ENCODE measurements at regions of chr10 and their contacts with region 1.

Region 1: DNA sequence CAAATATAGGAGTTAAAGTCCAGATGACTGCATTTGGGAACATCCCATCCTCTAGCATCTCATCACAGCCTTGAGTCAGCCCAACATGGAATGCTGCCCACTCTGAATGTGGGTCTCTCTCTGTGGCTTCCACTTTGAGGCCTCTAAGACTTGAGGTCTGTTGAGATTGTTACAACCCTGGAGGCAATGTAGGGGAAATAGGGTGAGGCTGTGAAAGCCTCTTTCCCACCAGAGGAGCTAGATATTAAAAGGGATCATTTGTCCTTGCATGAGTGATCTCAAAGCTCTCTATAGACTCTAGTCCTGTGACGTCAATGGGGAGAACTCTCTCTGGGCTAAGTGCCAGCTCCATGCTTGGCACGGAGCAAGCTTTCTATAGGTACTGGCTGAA is 6.4 kb upstream of the GOLGA7B start:
- DNase-seq: no peak
- ATAC-seq: no peak
- H3K4me3 ChIP-seq: no peak overlapping the region
- H3K27ac ChIP-seq: no peak overlapping the region
- H3K4me1 ChIP-seq: peaks cover 15 to 23% of the 10 kb centered on the region in 2 donors
- H3K27me3 ChIP-seq: no peaks in the 10 kb centered on the region
- CTCF ChIP-seq: no peak
- POLR2A ChIP-seq: no peak

Region 2: GRCh38 chr10:97822261-97822687 is 21.0 kb before region 1 on chr10:
- in situ Hi-C with region 1: no loop called
- intact Hi-C with region 1: loop called (anchors 1 kb)
- DNase-seq: peak; percentile 75 to 91
- ATAC-seq: peak; percentile 64 to 71
- H3K4me3 ChIP-seq: peak overlapping the region in 3 of 4 donors; percentile 35 to 47 (median 38)
- H3K27ac ChIP-seq: peak overlapping the region; percentile 96 to 98 (median 98)
- H3K4me1 ChIP-seq: peaks cover 33 to 49% of the 10 kb centered on the region in 2 donors
- H3K27me3 ChIP-seq: no peaks in the 10 kb centered on the region
- CTCF ChIP-seq: no peak
- POLR2A ChIP-seq: peak in 1 of 2 donors; percentile 52